ENCODE measurements at regions of chr2 and their contacts with region 1.

Region 1: DNA sequence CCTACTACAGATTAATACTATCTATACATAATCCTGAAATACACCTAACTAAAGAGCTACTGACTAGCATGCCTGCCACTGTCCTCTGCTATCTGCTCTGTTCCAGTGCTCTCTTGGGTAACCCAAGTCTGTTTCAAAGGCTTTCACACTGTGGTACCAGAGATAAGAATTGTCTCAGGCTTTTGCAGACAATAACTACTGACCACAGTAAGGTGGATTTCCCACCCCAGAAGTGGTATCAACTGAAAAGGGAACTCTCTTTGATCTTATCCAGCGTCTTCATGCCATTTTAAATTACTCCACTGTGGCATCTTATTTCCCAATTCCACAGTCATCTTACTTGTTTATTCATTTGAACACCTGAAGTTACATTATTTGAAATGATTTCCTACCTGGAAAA is 190.2 kb downstream of the IKZF2 start:
- DNase-seq: no peak
- H3K4me3 ChIP-seq: no peak overlapping the region
- H3K27ac ChIP-seq: no peak overlapping the region
- H3K4me1 ChIP-seq: peaks cover 21% of the 10 kb centered on the region
- H3K27me3 ChIP-seq: no peaks in the 10 kb centered on the region
- CTCF ChIP-seq: no peak
- POLR2A ChIP-seq: no peak

Region 2: GRCh38 chr2:213995400-213996105 is 1034.3 kb after region 1 on chr2:
- intact Hi-C with region 1: loop called (anchors 5 kb)
- DNase-seq: no peak
- H3K4me3 ChIP-seq: no peak overlapping the region
- H3K27ac ChIP-seq: no peak overlapping the region
- H3K4me1 ChIP-seq: no peaks in the 10 kb centered on the region
- H3K27me3 ChIP-seq: no peaks in the 10 kb centered on the region
- CTCF ChIP-seq: no peak
- POLR2A ChIP-seq: no peak

Measured in vagina (tissue), 2 donors.